ENCODE measurements at regions of chr7 and their contacts with region 1.

Region 1: DNA sequence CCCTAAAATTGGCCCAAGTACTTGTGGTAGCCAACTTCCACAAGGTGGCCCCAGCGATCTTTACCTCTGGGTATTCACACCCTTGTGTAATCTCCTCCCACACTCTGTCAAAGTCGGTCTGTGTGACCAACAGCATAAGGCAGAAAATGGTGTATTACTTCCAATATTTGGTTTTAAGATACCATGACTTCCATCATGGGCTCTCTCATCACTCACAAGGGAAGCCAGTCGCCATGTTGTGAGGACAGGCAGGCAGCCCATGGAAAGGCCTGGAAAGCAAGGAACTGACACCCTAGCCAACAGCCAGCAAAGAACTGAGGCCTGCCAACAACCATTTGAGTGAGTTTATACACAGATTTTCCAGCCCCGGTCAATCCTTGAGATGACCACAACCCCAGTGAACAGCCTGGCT is 91.0 kb upstream of the KMT2E start:
- DNase-seq: peak; percentile 24 to 86 (median 62)
- ATAC-seq: peak; percentile 87 to 96 (median 90)
- H3K4me3 ChIP-seq: no peak overlapping the region
- H3K4me3 Mint-ChIP-seq: no peak overlapping the region
- H3K27ac ChIP-seq: no peak overlapping the region
- H3K27ac Mint-ChIP-seq: peak overlapping the region; percentile 24 to 61
- H3K4me1 ChIP-seq: peaks cover 0 to 4% of the 10 kb centered on the region in 2 experiments
- H3K4me1 Mint-ChIP-seq: peaks cover 4 to 6% (median 4%) of the 10 kb centered on the region in 3 donors
- H3K27me3 ChIP-seq: no peaks in the 10 kb centered on the region
- H3K27me3 Mint-ChIP-seq: peaks cover 0 to 3% of the 10 kb centered on the region in 2 donors

Region 2: GRCh38 chr7:103573479-103574058 is 1349.4 kb before region 1 on chr7:
- CTCF ChIA-PET with region 1: interaction called in 1 of 2 experiments, 11 read pairs
- POLR2A ChIA-PET with region 1: no interaction called
- DNase-seq: peak in 1 of 35 experiments; percentile 49
- ATAC-seq: no peak
- H3K4me3 ChIP-seq: no peak overlapping the region
- H3K4me3 Mint-ChIP-seq: no peak overlapping the region
- H3K27ac ChIP-seq: no peak overlapping the region
- H3K27ac Mint-ChIP-seq: no peak overlapping the region
- H3K4me1 ChIP-seq: no peaks in the 10 kb centered on the region
- H3K4me1 Mint-ChIP-seq: no peaks in the 10 kb centered on the region
- H3K27me3 ChIP-seq: peaks cover 0 to 4% of the 10 kb centered on the region in 2 experiments
- H3K27me3 Mint-ChIP-seq: peaks cover 10 to 11% of the 10 kb centered on the region in 2 donors

Region 3: DNA sequence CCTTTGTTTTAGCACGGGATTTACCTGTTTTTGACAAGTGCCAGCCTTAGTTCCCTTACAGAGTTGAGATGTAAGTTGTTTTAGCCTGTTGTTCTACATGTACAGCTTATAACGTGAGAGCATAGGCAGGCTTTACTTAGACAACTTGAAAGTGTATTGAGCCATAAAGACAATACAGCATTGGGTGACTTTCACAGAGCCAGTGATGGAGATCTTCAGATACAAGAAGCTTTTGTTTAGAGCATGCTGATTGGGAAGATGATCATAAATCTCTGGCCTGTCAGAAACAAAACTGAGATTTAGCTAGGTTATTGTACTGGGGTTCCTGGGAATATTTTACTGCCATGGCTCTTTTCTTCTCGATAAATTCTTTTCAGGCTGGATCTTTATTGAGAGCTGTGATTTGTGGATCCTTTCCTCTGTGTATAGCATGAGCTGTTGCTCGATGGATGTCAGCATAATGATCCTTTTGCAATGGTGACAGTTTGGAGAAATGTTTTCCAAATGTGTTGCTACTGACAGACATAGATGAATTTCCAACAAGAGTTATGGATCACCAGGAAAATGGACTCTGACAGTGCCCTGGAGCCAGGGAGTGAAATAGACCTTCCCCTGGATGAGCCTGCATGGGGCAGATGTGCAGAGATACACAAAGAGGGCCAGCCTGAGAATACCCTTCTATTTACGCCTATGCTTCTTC is 564.4 kb before region 1 on chr7:
- CTCF ChIA-PET with region 1: no interaction called
- POLR2A ChIA-PET with region 1: no interaction called
- DNase-seq: no peak
- ATAC-seq: no peak
- H3K4me3 ChIP-seq: no peak overlapping the region
- H3K4me3 Mint-ChIP-seq: no peak overlapping the region
- H3K27ac ChIP-seq: no peak overlapping the region
- H3K27ac Mint-ChIP-seq: no peak overlapping the region
- H3K4me1 ChIP-seq: no peaks in the 10 kb centered on the region
- H3K4me1 Mint-ChIP-seq: no peaks in the 10 kb centered on the region
- H3K27me3 ChIP-seq: peaks cover 0 to 4% of the 10 kb centered on the region in 2 experiments
- H3K27me3 Mint-ChIP-seq: peaks cover 3 to 7% of the 10 kb centered on the region in 2 donors

Region 4: GRCh38 chr7:104883718-104884452 is 39.1 kb before region 1 on chr7:
- CTCF ChIA-PET with region 1: interaction called, 39 to 84 read pairs
- POLR2A ChIA-PET with region 1: interaction called in 1 of 2 experiments, 12 read pairs
- DNase-seq: peak; percentile 15 to 84 (median 61)
- ATAC-seq: peak; percentile 74 to 86 (median 81)
- H3K4me3 ChIP-seq: no peak overlapping the region
- H3K4me3 Mint-ChIP-seq: no peak overlapping the region
- H3K27ac ChIP-seq: no peak overlapping the region
- H3K27ac Mint-ChIP-seq: no peak overlapping the region
- H3K4me1 ChIP-seq: peaks cover 0 to 5% of the 10 kb centered on the region in 2 experiments
- H3K4me1 Mint-ChIP-seq: peaks cover 4 to 7% (median 6%) of the 10 kb centered on the region in 3 donors
- H3K27me3 ChIP-seq: peaks cover 0 to 3% of the 10 kb centered on the region in 2 experiments
- H3K27me3 Mint-ChIP-seq: peaks cover 4 to 8% of the 10 kb centered on the region in 2 donors

Region 5: GRCh38 chr7:104943502-104944343 is 20.7 kb after region 1 on chr7:
- CTCF ChIA-PET with region 1: interaction called, 4 to 10 read pairs
- POLR2A ChIA-PET with region 1: interaction called in 1 of 2 experiments, 4 read pairs
- DNase-seq: peak; percentile 25 to 80 (median 58)
- ATAC-seq: peak; percentile 19 to 47 (median 43)
- H3K4me3 ChIP-seq: peak overlapping the region; percentile 8 to 24
- H3K4me3 Mint-ChIP-seq: peak overlapping the region; percentile 81 to 96 (median 85)
- H3K27ac ChIP-seq: peak overlapping the region; percentile 99
- H3K27ac Mint-ChIP-seq: peak overlapping the region; percentile 99 to 100
- H3K4me1 ChIP-seq: peaks cover 30 to 65% of the 10 kb centered on the region in 2 experiments
- H3K4me1 Mint-ChIP-seq: peaks cover 66 to 74% (median 67%) of the 10 kb centered on the region in 3 donors
- H3K27me3 ChIP-seq: no peaks in the 10 kb centered on the region
- H3K27me3 Mint-ChIP-seq: no peaks in the 10 kb centered on the region

Region 6: GRCh38 chr7:105024743-105025142 is 101.7 kb after region 1 on chr7:
- CTCF ChIA-PET with region 1: no interaction called
- POLR2A ChIA-PET with region 1: no interaction called
- DNase-seq: no peak
- ATAC-seq: no peak
- H3K4me3 ChIP-seq: no peak overlapping the region
- H3K4me3 Mint-ChIP-seq: peak overlapping the region; percentile 21 to 38 (median 28)
- H3K27ac ChIP-seq: no peak overlapping the region
- H3K27ac Mint-ChIP-seq: no peak overlapping the region
- H3K4me1 ChIP-seq: peaks cover 34 to 41% of the 10 kb centered on the region in 2 experiments
- H3K4me1 Mint-ChIP-seq: peaks cover 85 to 92% (median 92%) of the 10 kb centered on the region in 3 donors
- H3K27me3 ChIP-seq: no peaks in the 10 kb centered on the region
- H3K27me3 Mint-ChIP-seq: no peaks in the 10 kb centered on the region

Region 7: DNA sequence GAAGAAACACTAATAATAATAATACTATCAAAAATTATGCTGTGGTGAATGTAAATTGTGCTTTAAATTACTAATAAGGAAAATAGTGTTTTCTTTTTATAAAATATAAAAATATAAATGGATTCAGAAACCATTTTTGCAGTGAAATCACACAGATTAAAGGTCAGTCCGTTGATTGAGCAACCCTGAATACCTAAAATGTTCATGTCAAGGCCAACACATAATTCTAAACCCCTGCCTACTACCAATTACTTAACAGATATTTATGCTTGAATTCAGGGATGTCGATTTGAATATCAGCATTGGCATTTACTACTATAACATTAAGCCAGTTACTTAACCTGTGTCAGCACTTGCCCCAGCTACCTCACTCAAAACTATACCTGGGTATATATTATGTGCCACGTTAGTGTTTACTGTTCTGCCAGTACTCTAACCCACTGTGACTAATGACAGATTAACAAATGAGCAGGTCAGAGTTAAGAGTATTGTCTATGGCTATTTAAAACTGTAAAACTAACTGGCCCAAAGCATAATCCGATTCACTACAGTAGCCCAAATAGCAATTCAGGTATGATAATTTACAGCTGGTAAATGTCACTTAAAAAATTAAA is 256.0 kb after region 1 on chr7:
- CTCF ChIA-PET with region 1: no interaction called
- POLR2A ChIA-PET with region 1: interaction called in 1 of 2 experiments, 12 read pairs
- DNase-seq: no peak
- ATAC-seq: no peak
- H3K4me3 ChIP-seq: no peak overlapping the region
- H3K4me3 Mint-ChIP-seq: no peak overlapping the region
- H3K27ac ChIP-seq: no peak overlapping the region
- H3K27ac Mint-ChIP-seq: no peak overlapping the region
- H3K4me1 ChIP-seq: no peaks in the 10 kb centered on the region
- H3K4me1 Mint-ChIP-seq: peaks cover 13 to 33% (median 33%) of the 10 kb centered on the region in 3 donors
- H3K27me3 ChIP-seq: no peaks in the 10 kb centered on the region
- H3K27me3 Mint-ChIP-seq: no peaks in the 10 kb centered on the region

Region 8: DNA sequence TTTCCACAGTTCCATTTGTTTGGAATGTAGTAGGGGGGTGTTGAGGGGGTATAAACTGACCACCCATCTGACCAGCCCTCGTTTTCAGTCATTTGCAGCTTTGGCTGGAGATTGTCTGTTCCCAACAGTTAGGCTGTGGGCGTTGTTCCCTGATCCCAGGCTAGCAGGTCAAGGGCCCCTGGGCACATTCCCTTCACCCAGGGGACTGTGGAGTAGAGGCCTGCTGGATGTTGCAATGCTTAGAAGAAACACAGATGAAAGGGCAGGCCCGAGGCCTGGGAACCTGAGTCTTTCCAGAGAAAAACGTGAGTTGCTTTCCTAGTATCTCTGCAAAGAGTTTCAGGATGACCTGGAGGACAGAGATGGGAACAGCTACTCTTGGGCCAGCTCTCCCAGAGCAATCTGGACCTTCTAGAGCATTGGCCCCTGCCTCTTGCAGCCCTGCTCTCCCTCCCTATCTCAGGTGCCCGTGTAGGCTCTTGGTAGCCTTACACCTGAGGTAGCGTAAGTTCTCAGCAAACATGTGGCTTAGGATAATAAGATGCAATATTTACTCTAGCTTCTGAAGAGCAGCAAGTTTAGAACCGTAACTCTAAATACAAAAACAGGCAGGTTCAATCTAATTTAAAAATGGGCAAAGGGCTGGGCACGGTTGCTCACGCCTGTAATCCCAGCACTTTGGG is 757.6 kb after region 1 on chr7:
- CTCF ChIA-PET with region 1: interaction called in 1 of 2 experiments, 14 read pairs
- POLR2A ChIA-PET with region 1: no interaction called
- DNase-seq: no peak
- ATAC-seq: no peak
- H3K4me3 ChIP-seq: no peak overlapping the region
- H3K4me3 Mint-ChIP-seq: no peak overlapping the region
- H3K27ac ChIP-seq: no peak overlapping the region
- H3K27ac Mint-ChIP-seq: peak overlapping the region in 1 of 2 donors; percentile 64
- H3K4me1 ChIP-seq: peaks cover 25 to 42% of the 10 kb centered on the region in 2 experiments
- H3K4me1 Mint-ChIP-seq: peaks cover 76 to 81% (median 77%) of the 10 kb centered on the region in 3 donors
- H3K27me3 ChIP-seq: no peaks in the 10 kb centered on the region
- H3K27me3 Mint-ChIP-seq: no peaks in the 10 kb centered on the region

Measured in T-cell (primary cell).